Activated naive CD4-positive, alpha-beta T cell treated with anti-CD3 and anti-CD28 coated beads for 36 hours (primary cell): ENCODE measurements at regions of chr6 and their contacts with region 1.

Region 1: DNA sequence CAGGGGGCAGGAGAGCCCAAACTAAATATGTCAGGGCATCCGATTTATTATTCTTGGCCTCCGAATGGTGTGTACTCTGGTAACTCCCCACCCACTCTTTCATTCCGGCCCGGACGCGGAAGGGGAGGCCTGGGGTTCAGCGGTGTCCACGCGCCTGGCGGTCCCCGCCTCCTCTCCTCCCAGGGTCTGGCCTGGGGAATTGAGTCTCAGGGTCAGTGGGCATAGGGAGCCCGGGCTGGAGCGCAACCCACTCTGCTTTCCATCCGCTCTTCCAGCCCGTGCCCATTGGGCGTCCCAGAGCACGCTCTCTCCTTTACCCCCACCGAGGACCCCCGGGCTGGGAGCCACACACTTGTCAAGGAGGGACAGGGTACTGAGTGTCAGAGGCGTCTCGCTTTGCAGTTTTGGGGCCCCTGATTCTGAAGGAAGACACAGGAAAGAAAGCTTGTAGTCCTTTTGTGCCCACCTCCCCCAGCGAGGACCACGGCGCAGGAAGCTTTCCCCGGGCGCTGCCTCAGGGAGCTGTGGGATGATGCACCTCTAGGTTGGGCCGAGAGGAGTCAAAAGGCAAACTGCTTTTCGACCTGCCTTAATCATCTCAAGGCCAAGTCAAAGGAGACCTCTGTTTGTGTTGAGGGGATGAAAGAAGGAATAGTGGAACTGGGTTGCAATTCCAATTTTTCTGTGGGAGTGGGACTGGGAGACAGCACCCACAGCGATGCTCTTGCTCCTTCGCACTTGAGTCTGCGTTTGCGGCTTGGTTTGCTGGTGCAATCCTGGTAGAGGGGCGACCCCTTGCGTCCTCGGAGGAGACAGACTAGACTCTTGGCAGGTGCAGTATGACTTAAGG is 2.5 kb downstream of the RSPO3 start:
- DNase-seq: peak; percentile 90
- H3K4me3 Mint-ChIP-seq: no peak overlapping the region
- H3K27ac Mint-ChIP-seq: no peak overlapping the region
- H3K4me1 Mint-ChIP-seq: peaks cover 12% of the 10 kb centered on the region
- H3K27me3 Mint-ChIP-seq: peaks cover 51% of the 10 kb centered on the region

Region 2: DNA sequence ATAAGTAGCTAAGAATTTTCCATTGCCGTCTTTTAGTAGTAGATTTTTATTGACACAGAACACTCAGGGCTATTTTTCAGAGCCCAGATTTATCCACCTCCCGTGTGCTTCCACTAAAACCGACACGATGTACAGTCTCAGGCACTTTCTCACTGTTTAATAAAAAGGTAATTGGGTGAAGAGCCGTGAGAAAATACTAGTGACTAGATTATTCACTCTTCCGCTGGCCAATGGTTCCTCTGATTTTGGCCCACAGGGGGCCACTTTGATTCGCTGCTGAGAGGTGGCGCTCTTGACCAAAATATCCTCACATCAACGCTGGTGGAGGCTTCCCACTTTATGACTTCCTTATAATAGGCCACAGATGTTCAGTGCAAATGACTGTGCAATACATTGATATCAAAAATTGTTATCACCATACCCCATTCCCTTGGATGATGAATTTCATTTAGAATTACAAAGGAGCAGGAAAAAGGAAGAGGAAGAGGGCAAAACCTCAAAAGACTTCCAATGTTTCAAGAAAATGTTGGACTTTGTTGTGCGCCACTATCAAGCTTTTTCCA is 1806.9 kb before region 1 on chr6:
- CTCF ChIA-PET with region 1: no interaction called
- intact Hi-C with region 1: loop called (anchors 2 kb)
- DNase-seq: peak; percentile 61
- H3K4me3 Mint-ChIP-seq: no peak overlapping the region
- H3K27ac Mint-ChIP-seq: no peak overlapping the region
- H3K4me1 Mint-ChIP-seq: no peaks in the 10 kb centered on the region
- H3K27me3 Mint-ChIP-seq: peaks cover 2% of the 10 kb centered on the region

Region 3: DNA sequence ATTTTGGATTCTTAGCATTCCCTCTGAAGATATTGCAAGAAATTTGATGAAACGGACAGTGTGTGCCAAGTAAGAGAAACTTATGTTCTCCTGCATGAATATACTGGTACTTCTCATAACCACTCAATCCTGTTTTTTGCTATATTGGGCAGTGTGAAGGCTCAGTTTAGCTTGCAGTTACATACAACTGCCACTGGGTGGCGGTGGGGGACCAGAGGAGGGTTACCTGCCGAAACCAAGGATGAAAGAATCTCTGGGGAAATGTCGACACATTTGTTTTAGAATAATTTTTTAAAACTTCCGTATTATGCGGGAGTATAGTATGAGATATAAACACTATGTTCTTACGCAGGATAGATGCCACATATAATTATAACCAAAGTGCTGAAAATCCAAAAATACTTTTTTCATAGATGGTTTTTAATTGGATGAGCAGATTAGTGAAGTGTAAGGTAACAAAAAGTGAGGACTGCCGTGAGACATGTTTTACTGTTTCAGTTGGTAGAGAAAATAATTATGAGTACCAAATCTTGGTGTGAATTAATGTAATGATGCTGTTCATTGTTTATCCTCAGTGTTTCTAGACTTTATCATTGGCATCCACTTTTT is 1124.9 kb before region 1 on chr6:
- CTCF ChIA-PET with region 1: interaction called, 3 read pairs
- intact Hi-C with region 1: loop called (anchors 1 kb)
- DNase-seq: peak; percentile 77
- H3K4me3 Mint-ChIP-seq: peak overlapping the region; percentile 48
- H3K27ac Mint-ChIP-seq: no peak overlapping the region
- H3K4me1 Mint-ChIP-seq: peaks cover 29% of the 10 kb centered on the region
- H3K27me3 Mint-ChIP-seq: no peaks in the 10 kb centered on the region

Region 4: GRCh38 chr6:126176282-126176681 is 944.7 kb before region 1 on chr6:
- CTCF ChIA-PET with region 1: no interaction called
- intact Hi-C with region 1: loop called (anchors 1 kb)
- DNase-seq: no peak
- H3K4me3 Mint-ChIP-seq: no peak overlapping the region
- H3K27ac Mint-ChIP-seq: no peak overlapping the region
- H3K4me1 Mint-ChIP-seq: peaks cover 2% of the 10 kb centered on the region
- H3K27me3 Mint-ChIP-seq: no peaks in the 10 kb centered on the region

Region 5: GRCh38 chr6:126361832-126362412 is 759.1 kb before region 1 on chr6:
- CTCF ChIA-PET with region 1: no interaction called
- intact Hi-C with region 1: no loop called
- DNase-seq: no peak
- H3K4me3 Mint-ChIP-seq: no peak overlapping the region
- H3K27ac Mint-ChIP-seq: no peak overlapping the region
- H3K4me1 Mint-ChIP-seq: no peaks in the 10 kb centered on the region
- H3K27me3 Mint-ChIP-seq: no peaks in the 10 kb centered on the region

Region 6: DNA sequence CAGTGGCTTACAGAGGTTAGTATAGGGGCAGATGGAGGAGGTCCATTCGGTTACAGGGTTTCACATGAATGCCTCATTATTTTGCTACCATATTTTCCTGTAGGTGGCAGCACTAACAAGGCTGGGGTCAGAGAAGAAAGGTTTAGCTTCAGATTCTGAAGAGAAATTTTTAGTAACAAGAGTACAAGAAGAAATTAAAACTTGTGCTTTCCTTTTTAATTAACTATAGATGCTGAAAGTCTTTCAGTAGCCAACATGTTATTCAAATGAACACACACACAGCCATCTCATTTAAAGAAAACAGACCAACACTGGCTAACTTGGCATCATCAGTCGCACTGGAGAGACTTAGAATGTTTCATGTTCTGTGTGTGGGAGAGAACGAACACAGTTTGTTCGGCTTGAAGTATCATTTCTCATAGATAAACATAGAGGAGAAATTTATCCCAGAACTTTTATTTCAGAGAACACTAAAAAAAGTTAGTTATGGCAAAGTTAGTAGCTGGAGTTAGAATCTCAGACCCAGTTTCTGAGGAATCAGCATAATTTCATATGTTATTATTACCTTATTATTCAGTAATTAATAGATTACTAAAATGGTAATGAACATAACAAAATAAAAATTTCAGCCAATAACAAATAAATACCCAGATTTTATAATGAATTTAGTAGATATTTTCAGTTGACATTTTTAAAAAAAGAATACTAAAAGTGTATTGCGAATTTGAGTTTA is 316.5 kb before region 1 on chr6:
- CTCF ChIA-PET with region 1: no interaction called
- intact Hi-C with region 1: loop called (anchors 1 kb)
- DNase-seq: peak; percentile 13
- H3K4me3 Mint-ChIP-seq: no peak overlapping the region
- H3K27ac Mint-ChIP-seq: no peak overlapping the region
- H3K4me1 Mint-ChIP-seq: no peaks in the 10 kb centered on the region
- H3K27me3 Mint-ChIP-seq: no peaks in the 10 kb centered on the region

Region 7: GRCh38 chr6:127031511-127031910 is 89.5 kb before region 1 on chr6:
- CTCF ChIA-PET with region 1: no interaction called
- intact Hi-C with region 1: no loop called
- DNase-seq: no peak
- H3K4me3 Mint-ChIP-seq: no peak overlapping the region
- H3K27ac Mint-ChIP-seq: no peak overlapping the region
- H3K4me1 Mint-ChIP-seq: no peaks in the 10 kb centered on the region
- H3K27me3 Mint-ChIP-seq: no peaks in the 10 kb centered on the region